ENCODE measurements at regions of chr16 and their contacts with region 1.

Region 1: DNA sequence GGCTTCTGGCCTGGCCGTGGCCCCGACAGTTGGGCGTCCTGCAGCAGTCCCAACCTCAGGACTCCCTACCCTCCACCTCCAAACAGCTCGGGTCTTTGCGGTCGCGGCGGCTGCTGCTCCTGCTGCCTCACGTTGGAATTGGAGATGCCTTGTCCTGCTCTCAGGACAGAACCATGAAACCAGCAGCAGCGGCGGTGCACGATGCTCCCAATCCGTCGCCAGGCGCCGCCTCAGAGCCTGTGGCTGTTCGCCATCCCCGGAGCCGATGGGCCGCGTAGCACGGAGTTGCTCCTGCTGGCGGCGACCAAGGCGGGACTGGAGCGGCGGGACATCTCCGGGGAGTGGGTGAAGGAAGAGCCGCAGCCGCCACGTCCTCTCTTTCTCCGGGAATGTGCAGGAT is 1965.9 kb downstream of the TP53TG3F start:
- DNase-seq: no peak

Region 2: DNA sequence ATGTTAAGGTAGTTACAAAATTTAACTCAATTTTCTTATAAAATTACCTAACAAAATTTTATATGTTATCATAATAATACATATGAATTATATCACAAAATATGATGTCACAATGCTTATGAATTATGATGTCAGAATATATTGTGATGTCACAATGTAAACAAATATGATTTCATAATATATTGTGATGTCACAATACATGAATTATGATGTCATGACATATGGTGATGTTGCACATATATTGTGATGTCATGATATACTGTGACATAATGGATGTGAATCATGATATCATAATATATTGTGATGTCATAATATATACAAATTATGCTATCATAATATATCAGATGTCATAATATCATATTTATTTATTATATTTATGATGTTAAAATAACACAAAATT is 85.9 kb before region 1 on chr16:
- in situ Hi-C with region 1: loop called (anchors 5 kb)
- DNase-seq: no peak

Region 3: DNA sequence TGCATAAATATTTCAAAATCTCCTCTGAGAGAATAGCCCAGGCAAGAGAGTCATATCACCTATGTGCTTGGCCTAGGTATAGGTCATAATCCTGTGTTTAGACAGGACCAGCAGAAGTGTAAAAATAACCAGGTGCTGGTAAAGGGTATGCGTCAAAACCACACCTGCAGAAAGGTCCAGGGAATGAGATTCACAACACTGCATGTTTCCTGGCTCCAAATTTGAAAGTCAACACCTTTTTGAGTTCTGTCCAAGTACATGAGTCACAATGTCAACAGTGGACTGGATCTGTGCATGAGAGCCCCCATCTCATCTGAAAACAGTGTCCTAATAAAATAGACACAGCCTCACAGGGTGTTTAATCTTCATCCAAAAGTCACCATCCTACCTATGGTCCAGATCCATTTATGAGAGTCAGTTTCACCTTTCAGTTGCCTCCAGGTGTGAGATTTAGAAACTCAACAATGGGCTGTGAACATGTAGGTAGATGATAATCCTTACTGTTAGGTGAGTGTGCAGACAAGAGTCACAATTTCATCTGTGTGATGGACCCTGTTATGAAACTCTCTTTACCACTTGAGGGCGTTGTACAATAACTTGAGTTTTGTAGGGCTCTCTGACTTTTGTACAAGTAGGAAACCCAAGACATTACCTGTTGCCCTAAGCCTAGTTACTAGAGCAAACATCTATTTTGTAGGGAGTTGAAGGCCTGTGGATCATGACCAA is 134.8 kb after region 1 on chr16:
- in situ Hi-C with region 1: no loop called
- DNase-seq: peak; percentile 55